Stomach (tissue), 19 donors: ENCODE measurements at regions of chr16 and their contacts with region 1.

Region 1: GRCh38 chr16:86508947-86509758 is 1.2 kb upstream of the FOXF1 start:
- DNase-seq: peak in 1 of 2 donors; percentile 84
- H3K4me3 ChIP-seq: peak overlapping the region; percentile 53 to 73 (median 66)
- H3K27ac ChIP-seq: peak overlapping the region; percentile 86 to 99 (median 91)
- H3K4me1 ChIP-seq: peaks cover 24 to 64% (median 45%) of the 10 kb centered on the region in 4 donors
- H3K27me3 ChIP-seq: peaks cover 0 to 100% (median 96%) of the 10 kb centered on the region in 3 donors
- CTCF ChIP-seq: no peak
- EP300 ChIP-seq: no peak
- POLR2A ChIP-seq: no peak

Region 2: GRCh38 chr16:86343027-86343787 is 165.9 kb before region 1 on chr16:
- intact Hi-C with region 1: loop called (anchors 10 kb)
- DNase-seq: peak; percentile 42 to 88
- H3K4me3 ChIP-seq: peak overlapping the region in 1 of 4 donors; percentile 0
- H3K27ac ChIP-seq: peak overlapping the region; percentile 76 to 92 (median 87)
- H3K4me1 ChIP-seq: peaks cover 9 to 27% (median 20%) of the 10 kb centered on the region in 4 donors
- H3K27me3 ChIP-seq: peaks cover 0 to 50% (median 0%) of the 10 kb centered on the region in 3 donors
- CTCF ChIP-seq: no peak
- EP300 ChIP-seq: peak; percentile 98
- POLR2A ChIP-seq: no peak